GM10248 (cell line): ENCODE measurements at regions of chr1 and their contacts with region 1.

Region 1: GRCh38 chr1:41268154-41268770 is 26.2 kb upstream of the SCMH1 start:
- DNase-seq: peak; percentile 83
- CTCF ChIP-seq: peak; percentile 95

Region 2: DNA sequence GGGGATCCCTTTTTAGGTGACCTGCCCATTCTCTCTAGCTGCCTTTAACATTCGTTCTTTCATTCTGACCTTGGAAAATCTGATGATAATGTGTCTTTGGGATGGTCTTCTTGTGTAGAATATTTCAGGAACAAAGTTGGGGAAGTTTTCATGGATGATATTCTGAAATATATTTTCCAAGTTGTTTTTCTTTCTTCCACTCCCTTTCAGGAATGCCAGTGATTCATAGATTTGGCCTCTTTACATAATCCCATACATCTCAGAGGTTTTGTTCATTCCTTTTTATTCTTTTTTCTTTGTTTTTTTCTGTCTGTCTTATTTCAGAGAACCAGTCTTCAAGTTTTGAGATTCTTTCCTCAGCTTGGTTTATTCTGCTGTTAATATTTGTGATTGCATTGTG is 12.3 kb before region 1 on chr1:
- CTCF ChIA-PET with region 1: interaction called, 12 read pairs
- POLR2A ChIA-PET with region 1: no interaction called
- DNase-seq: no peak
- CTCF ChIP-seq: no peak